PC-9 (cell line): ENCODE measurements at regions of chr4 and their contacts with region 1.

Region 1: DNA sequence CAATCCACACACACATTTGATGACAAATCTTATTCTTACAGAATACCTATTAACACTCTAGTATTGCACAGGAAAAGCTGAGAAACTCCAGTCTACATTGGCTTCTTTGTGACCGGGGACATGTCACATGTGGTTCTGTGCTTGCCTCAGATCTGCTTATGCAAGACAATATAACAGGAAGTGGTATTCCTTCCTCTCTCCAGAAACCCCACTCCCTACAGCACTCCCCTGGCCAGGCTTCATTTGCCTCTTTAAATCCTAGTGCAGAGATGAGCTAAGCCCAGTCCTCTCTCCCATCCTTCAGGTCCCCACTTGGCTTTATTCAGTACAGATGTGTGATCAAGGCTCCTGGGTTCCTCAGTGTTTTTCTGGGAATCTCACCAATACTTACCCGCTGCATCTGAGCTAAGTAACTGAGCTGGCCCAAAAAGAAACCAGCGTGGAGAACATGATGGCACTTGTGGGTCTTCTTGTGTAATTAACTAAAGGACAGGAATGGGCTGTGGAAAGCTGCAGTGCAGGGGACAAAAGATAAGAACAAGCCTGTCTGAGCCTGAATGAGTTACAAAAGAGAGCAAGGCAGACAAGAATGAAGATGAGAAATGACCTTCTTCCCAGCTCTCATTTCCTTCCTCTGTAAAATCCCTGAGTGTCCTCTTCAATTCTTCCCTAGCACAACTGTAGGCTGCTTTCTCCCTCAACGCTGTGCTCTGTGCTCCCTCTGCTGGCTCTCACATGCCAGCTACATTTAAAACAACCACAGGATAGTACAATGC is 105.6 kb downstream of the HNRNPD start:
- DNase-seq: no peak
- H3K4me3 ChIP-seq: no peak overlapping the region
- H3K27ac ChIP-seq: no peak overlapping the region
- H3K4me1 ChIP-seq: no peaks in the 10 kb centered on the region
- H3K27me3 ChIP-seq: no peaks in the 10 kb centered on the region
- CTCF ChIP-seq: peak; percentile 67

Region 2: DNA sequence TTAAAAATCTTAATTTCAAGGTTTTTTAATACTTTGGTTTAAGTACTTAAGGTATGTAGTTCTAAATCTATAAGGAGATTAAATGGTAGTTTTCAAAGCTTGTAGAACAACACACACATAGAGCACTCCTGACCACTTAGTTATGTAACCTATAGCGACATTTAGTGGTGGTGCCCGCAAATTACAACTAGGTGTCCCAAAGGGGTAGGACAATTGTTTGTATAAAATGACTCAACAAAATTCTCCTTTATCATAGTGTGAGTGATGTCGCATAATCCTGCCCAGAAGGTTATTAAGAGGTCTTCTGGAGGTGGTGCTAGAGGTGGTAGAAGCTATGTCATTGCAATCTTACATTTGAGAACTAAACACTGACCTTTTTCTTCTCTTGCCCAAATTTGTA is 423.5 kb before region 1 on chr4:
- CTCF ChIA-PET with region 1: no interaction called
- POLR2A ChIA-PET with region 1: no interaction called
- intact Hi-C with region 1: loop called (anchors 10 kb)
- DNase-seq: peak; percentile 58 to 74
- H3K4me3 ChIP-seq: no peak overlapping the region
- H3K27ac ChIP-seq: no peak overlapping the region
- H3K4me1 ChIP-seq: no peaks in the 10 kb centered on the region
- H3K27me3 ChIP-seq: no peaks in the 10 kb centered on the region
- CTCF ChIP-seq: peak; percentile 60